ENCODE measurements at regions of chr5 and their contacts with region 1.

Region 1: DNA sequence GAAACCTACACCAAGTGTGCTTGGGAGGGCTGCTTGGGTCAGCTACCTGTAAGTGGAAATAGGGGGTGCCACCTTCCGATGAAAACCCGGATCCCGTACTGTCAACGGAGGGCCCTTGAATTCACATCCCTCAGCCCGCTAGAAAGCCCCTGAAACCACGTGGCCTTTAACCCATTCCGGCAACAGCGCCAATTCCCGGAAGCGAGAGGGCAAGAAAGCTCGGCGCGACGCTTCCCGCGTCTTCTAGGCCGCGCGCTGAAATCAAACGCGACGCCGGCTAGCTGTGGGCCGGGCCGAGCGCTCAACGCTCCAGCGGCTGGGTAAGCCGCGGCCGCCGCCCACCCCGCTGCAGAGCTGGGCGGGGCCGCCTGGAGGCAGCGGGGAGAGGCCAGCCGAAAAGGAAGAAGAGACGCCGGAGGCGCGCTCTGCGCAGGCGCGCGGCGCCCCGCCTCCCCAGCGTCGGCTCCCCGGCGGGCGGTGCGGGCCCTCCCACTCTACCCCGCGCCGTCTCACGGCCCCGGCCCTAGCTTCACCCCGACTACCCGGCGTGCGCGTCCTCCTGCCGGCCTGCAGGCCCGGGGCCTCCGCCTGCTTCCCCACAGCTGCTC is at the start of gene KIF2A:
- DNase-seq: peak; percentile 95
- ATAC-seq: peak; percentile 99
- total RNA-seq, gene KIF2A: 9.8 TPM

Region 2: DNA sequence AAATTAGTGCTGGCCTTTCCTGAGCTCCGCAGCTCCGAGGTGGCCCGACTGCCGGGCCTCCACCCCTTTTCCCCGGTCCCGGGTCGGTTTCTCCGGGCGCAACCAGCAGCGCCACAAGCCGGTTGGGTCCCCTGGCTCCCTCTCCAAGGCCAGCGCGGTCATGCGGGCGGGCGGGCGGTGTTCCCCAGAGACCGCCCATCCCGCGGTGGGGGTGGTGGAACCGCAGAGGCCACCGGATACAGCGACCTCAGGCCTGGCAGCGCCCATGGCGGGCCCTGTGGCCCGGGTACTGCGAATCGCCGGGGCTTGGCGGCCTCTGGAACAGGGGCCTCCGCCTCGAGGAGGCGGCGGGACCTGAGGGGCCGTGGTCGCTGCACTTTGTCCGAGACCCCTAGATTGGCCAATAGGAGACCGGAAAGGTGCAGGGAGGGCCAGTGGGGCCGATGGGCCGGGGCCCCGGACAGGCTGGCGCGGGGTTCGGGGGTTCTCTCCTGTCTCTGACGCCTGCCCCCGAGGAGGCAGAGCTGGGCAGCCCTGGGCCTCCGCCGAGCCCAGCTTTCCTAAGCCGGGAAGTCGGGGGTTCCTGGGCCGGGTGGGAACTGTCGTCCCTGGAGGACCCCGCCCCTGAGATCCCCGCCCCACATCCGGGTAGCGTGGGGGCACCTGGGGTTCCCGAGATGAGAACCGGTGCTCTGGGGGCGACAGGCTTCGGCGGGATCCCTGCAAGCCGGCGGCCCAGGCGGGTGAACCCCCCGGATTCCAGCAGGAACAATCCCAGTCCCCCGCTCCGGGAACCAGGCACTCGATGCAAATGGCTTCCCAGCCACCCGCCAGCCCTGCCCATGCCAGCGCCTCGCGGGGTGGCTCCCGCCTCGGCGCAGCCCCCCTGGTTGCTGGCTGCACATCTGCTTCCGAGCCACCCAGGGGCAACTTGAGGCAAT is 679.9 kb before region 1 on chr5:
- intact Hi-C with region 1: no loop called
- DNase-seq: peak; percentile 89
- ATAC-seq: peak; percentile 96

Region 3: DNA sequence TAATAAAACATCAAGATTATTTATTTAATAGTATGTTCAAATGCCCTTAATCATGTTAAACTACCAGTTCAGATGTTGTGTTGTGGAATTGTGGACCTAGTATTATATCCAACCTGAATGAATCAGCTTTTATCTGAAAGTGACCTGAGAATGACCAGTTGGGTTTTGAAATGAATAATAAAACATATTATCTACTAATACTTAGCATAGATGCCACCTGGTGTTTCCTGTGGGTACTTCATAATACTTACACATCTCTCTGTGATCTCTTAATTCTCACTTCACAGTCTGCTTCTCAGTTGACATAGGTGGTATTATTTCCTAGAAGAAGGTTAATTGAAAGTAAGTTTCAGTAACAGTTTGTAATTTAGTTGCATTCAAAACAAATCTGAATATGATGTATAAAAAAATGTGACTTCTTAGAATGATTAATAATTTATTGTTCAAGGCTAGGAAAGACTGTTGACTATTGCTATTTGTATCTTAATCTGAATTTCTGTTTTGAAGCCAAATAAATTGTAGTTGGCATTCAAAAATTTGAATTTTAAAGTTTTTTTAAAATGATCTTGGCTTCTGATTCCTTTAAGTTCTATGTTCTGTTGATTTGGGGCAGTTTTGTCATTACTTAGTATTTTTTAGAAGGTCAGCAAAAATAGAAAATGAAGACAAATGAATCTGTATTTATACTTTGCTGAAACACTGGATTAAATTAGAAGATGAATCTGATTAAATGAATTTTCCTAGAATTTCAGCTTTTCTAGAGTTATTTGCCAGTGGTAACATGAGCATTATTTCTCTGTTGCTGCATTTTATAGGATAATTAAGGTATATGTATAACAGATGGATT is 48.4 kb after region 1 on chr5:
- intact Hi-C with region 1: loop called (anchors 10 kb)
- DNase-seq: no peak
- ATAC-seq: no peak

Region 4: GRCh38 chr5:62412537-62413329 is 106.9 kb after region 1 on chr5 and contains the start of gene IPO11:
- intact Hi-C with region 1: loop called (anchors 5 kb)
- DNase-seq: peak; percentile 99
- ATAC-seq: peak; percentile 99
- total RNA-seq, gene IPO11: 34.5 TPM